Posterior vena cava (tissue), 2 donors: ENCODE measurements at regions of chr2 and their contacts with region 1.

Region 1: DNA sequence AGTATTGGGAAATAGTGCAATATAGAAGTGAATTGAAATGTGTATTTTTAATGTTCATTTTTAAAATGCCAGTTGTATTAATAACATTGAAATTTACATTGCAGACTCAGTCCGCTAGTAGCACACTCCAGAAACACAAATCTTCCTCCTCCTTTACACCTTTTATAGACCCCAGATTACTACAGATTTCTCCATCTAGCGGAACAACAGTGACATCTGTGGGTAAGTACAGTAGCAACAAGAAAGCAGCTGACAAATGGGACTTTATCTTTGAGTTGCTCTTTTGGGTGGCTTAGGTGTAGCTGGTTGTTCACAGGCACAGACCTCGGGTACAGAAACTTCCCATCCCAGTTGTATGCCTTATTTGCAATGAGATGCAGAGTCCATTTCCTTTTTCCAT is 118.2 kb upstream of the IL1R2 start:
- DNase-seq: no peak

Region 2: DNA sequence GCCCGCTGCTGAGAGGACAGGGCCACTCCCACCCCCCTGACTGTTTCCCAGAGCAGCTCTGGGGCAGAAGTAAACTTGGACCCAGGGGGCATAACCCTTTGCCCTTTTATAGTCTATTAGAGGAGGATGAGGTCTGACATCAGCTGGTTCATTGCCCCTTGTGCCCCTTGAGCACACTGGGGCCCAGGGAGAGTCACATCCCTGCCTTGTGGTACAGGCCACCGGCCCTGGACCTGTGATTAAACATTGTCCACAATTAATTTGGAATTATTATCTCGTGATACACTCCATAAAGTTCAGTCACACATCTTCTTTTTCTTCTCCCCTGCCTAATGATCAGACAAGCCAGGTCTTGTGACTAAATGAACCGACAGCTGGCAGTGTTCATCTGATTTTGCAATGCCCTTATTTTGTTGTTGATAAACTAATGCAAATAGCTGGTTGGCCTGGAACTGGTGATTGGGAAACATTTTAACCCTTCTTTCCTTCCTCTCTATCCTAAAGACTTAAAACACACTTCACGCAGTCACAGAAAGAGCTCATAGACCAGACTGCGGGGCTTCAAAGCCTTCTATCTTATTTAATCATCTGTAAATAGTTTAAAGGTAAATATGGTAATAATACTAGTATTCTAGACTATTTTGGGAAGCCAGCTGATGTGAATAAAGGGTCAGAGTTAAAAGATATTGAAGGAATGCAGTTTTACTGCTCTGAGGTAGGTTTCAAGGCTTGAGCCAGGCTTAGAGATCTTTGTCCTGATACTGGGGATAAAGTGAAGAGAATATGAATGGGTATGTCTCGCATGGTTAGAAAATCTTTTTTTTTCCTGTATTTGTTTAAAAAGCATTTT is 282.3 kb after region 1 on chr2:
- intact Hi-C with region 1: loop called in 1 of 2 experiments (anchors 10 kb)
- DNase-seq: no peak